Mammary epithelial cell (primary cell): ENCODE measurements at regions of chr19 and their contacts with region 1.

Region 1: DNA sequence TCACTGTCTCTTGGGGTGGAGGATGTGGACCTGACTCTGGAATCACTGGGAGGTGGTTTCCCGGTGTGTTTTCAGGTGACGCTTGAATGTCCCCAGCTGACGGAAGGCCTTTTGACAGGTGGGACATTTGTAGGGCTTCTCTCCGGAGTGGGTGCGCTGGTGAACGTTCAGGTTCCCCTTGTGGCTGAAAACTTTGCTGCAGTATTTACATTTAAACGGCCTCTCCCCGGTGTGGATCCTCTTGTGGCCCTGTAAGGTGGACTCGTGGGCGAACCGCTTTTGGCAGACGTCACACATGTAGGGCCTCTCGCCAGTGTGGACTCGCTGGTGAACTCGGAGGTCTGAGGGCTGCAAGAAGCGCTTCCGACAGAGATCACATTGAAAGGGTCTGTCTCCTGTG is 7.8 kb downstream of the ZSCAN5B start:
- DNase-seq: no peak
- H3K4me3 ChIP-seq: no peak overlapping the region
- H3K27ac ChIP-seq: no peak overlapping the region
- H3K4me1 ChIP-seq: no peaks in the 10 kb centered on the region
- H3K27me3 ChIP-seq: no peaks in the 10 kb centered on the region
- CTCF ChIP-seq: no peak

Region 2: DNA sequence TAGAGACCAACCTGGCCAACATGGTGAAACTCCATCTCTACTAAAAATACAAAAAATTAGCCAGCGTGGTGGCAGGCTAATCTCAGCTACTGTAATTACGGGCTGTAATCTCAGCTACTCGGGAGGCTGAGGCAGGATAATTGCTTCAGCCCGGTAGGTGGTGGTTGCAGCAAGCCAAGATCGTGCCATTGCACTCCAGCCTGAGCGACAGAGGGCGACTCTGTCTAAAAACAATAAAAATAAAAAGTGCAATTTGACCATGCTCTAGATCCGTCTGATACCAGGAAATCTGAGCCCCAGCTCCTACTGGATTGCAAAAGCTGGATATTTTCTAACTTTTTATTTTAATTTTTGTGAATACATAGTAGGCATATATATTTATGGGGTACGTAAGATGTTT is 223.2 kb before region 1 on chr19:
- CTCF ChIA-PET with region 1: no interaction called
- dilution Hi-C with region 1: no loop called
- in situ Hi-C with region 1: no loop called
- intact Hi-C with region 1: no loop called
- DNase-seq: no peak
- H3K4me3 ChIP-seq: no peak overlapping the region
- H3K27ac ChIP-seq: no peak overlapping the region
- H3K4me1 ChIP-seq: no peaks in the 10 kb centered on the region
- H3K27me3 ChIP-seq: no peaks in the 10 kb centered on the region
- CTCF ChIP-seq: no peak

Region 3: GRCh38 chr19:56097306-56097705 is 92.5 kb before region 1 on chr19:
- CTCF ChIA-PET with region 1: no interaction called
- dilution Hi-C with region 1: loop called (anchors 5 kb)
- in situ Hi-C with region 1: no loop called
- intact Hi-C with region 1: no loop called
- DNase-seq: no peak
- H3K4me3 ChIP-seq: no peak overlapping the region
- H3K27ac ChIP-seq: no peak overlapping the region
- H3K4me1 ChIP-seq: peaks cover 10% of the 10 kb centered on the region
- H3K27me3 ChIP-seq: no peaks in the 10 kb centered on the region
- CTCF ChIP-seq: no peak

Region 4: GRCh38 chr19:56162258-56162657 is 27.5 kb before region 1 on chr19:
- CTCF ChIA-PET with region 1: no interaction called
- dilution Hi-C with region 1: no loop called
- in situ Hi-C with region 1: no loop called
- intact Hi-C with region 1: no loop called
- DNase-seq: no peak
- H3K4me3 ChIP-seq: no peak overlapping the region
- H3K27ac ChIP-seq: no peak overlapping the region
- H3K4me1 ChIP-seq: no peaks in the 10 kb centered on the region
- H3K27me3 ChIP-seq: no peaks in the 10 kb centered on the region
- CTCF ChIP-seq: no peak

Region 5: DNA sequence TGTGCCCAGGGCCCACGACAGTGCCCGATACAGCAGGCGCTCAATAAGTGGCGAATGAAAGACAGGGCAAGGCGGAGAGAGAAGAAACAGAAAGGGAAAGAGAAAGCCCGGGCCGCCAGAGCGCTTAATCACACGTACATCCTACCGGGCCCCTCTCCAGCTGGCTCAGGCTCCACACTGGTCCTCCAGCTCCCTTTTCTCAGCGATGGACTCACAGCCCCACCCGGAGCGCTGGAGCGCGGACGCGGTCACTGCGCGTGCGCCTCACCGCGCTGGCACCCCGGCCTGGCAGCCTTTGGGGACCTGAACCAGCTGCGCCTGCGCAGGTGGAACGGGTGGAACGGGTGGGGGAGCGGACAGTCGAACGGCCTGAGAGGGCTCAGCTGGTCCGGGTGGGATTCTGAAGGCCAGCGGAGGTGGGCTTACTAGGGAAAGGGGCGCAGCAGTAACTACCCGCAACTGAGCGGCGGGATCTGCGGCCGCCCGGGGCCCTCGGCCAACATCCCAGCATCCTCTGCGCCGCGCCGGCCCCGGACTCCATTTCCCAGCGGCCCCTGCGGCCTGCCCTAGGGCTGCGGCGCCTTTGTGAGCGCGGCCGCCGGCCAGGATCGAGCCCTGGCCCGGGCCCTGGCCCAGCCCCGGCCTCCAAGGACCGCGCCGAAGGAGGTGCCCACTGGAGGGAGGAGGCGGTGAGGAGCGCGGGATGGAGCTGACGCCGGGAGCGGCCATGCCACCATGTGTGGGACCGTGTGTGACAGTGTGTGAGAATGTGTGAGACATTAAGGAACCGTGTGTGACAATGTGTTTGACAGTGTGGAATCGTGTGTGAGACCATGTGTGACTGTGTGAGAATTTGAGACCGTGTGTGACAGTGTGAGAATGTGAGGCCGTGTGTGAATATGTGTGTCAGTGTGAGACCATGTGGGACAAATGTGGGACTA is 214.2 kb after region 1 on chr19 and contains the start of gene ZNF583:
- CTCF ChIA-PET with region 1: no interaction called
- dilution Hi-C with region 1: no loop called
- in situ Hi-C with region 1: no loop called
- intact Hi-C with region 1: no loop called
- DNase-seq: peak; percentile 96
- H3K4me3 ChIP-seq: peak within 1 kb of the TSS; percentile 64 to 88 (median 67)
- H3K27ac ChIP-seq: peak within 1 kb of the TSS; percentile 9
- H3K4me1 ChIP-seq: peaks cover 7% of the 10 kb centered on the region
- H3K27me3 ChIP-seq: no peaks in the 10 kb centered on the region
- CTCF ChIP-seq: no peak
- total RNA-seq, gene ZNF583: 4.7 to 5.5 TPM